ENCODE measurements at regions of chr2 and their contacts with region 1.

Region 1: GRCh38 chr2:64852771-64853705 is 136.2 kb upstream of the SLC1A4 start:
- DNase-seq: no peak
- H3K4me3 Mint-ChIP-seq: no peak overlapping the region
- H3K27ac Mint-ChIP-seq: no peak overlapping the region
- H3K4me1 Mint-ChIP-seq: peaks cover 18% of the 10 kb centered on the region
- H3K27me3 Mint-ChIP-seq: peaks cover 2% of the 10 kb centered on the region

Region 2: GRCh38 chr2:64311948-64312621 is 541.0 kb before region 1 on chr2:
- CTCF ChIA-PET with region 1: no interaction called
- POLR2A ChIA-PET with region 1: no interaction called
- DNase-seq: no peak
- H3K4me3 Mint-ChIP-seq: no peak overlapping the region
- H3K27ac Mint-ChIP-seq: no peak overlapping the region
- H3K4me1 Mint-ChIP-seq: no peaks in the 10 kb centered on the region
- H3K27me3 Mint-ChIP-seq: peaks cover 15% of the 10 kb centered on the region

Region 3: GRCh38 chr2:64574871-64575270 is 278.2 kb before region 1 on chr2:
- CTCF ChIA-PET with region 1: no interaction called
- POLR2A ChIA-PET with region 1: no interaction called
- DNase-seq: no peak
- H3K4me3 Mint-ChIP-seq: no peak overlapping the region
- H3K27ac Mint-ChIP-seq: peak overlapping the region; percentile 14
- H3K4me1 Mint-ChIP-seq: peaks cover 10% of the 10 kb centered on the region
- H3K27me3 Mint-ChIP-seq: no peaks in the 10 kb centered on the region

Region 4: GRCh38 chr2:64644177-64645004 is 208.6 kb before region 1 on chr2:
- CTCF ChIA-PET with region 1: no interaction called
- POLR2A ChIA-PET with region 1: no interaction called
- DNase-seq: peak; percentile 74
- H3K4me3 Mint-ChIP-seq: peak overlapping the region; percentile 79
- H3K27ac Mint-ChIP-seq: peak overlapping the region; percentile 93
- H3K4me1 Mint-ChIP-seq: peaks cover 79% of the 10 kb centered on the region
- H3K27me3 Mint-ChIP-seq: no peaks in the 10 kb centered on the region

Region 5: DNA sequence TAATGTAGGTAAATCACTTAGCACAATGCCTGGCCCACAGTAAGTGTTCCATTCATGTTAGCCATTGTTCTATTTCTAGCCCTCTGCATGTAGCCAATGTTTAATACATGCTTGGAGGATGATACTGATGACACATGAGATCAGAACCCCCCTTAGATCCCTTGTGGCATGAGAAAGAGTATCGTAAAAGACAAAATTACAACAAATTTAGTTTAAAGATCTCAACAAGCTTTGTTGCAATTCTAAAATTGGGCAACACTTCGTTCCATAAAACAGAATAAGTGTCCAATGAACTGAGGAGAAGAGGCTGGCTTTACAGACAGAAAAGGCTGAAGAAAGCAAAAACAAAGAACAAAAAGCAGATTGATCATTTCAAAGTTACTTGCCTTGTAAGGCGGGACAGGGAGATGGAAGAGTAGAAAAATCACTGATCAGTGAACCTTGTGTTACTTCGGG is 12.6 kb before region 1 on chr2:
- CTCF ChIA-PET with region 1: interaction called, 11 read pairs
- POLR2A ChIA-PET with region 1: no interaction called
- DNase-seq: no peak
- H3K4me3 Mint-ChIP-seq: no peak overlapping the region
- H3K27ac Mint-ChIP-seq: no peak overlapping the region
- H3K4me1 Mint-ChIP-seq: peaks cover 14% of the 10 kb centered on the region
- H3K27me3 Mint-ChIP-seq: peaks cover 7% of the 10 kb centered on the region

Region 6: GRCh38 chr2:64873472-64873924 is 20.5 kb after region 1 on chr2:
- CTCF ChIA-PET with region 1: no interaction called
- POLR2A ChIA-PET with region 1: no interaction called
- DNase-seq: peak; percentile 77
- H3K4me3 Mint-ChIP-seq: no peak overlapping the region
- H3K27ac Mint-ChIP-seq: no peak overlapping the region
- H3K4me1 Mint-ChIP-seq: peaks cover 6% of the 10 kb centered on the region
- H3K27me3 Mint-ChIP-seq: peaks cover 13% of the 10 kb centered on the region